ENCODE measurements at regions of chr2 and their contacts with region 1.

Region 1: DNA sequence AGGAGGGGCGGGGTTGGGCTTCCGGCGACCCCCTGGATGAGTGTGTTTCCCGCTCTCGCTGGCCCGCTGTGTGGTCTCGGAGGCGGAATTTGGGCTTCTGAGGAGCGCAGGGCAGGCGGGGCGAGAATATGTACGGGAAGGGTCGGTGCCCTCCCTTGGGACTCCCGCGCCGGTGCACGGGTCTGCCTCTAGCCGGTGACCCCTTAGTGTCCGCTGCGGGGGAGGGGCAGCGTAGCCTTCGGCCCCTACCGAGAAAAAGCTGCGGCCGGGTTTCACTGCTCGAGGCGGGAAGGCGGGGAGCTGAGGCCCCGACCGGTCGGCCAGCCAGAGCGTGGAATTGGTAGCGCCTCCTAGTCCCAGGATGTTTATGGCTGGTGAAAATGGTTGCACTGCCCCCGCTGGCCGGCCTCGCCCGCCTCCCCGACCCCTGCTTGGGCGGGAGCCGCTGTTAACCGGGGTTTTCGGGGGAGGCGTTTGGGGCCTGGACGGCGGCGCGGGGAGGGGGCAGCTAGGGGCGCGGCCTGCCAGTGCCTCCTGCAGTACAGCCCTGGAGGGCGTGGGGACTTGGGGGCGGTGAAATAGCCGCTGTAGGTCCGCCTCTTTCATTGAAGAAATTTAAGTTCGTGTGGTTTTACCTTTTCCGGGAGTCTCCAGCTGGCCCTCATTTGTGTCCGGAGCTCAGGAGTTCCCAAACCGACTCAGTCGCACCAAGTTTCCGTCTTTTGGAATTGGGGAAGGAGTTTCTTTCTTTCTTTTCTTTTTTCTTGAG is at the start of gene UGP2:
- DNase-seq: peak; percentile 92
- H3K4me3 Mint-ChIP-seq: peak within 1 kb of the TSS; percentile 93
- H3K27ac Mint-ChIP-seq: peak within 1 kb of the TSS; percentile 96
- H3K4me1 Mint-ChIP-seq: peaks cover 13% of the 10 kb centered on the region
- H3K27me3 Mint-ChIP-seq: no peaks in the 10 kb centered on the region
- CTCF ChIP-seq: no peak
- total RNA-seq, gene UGP2: 77.3 and 78.4 TPM in 2 replicates

Region 2: DNA sequence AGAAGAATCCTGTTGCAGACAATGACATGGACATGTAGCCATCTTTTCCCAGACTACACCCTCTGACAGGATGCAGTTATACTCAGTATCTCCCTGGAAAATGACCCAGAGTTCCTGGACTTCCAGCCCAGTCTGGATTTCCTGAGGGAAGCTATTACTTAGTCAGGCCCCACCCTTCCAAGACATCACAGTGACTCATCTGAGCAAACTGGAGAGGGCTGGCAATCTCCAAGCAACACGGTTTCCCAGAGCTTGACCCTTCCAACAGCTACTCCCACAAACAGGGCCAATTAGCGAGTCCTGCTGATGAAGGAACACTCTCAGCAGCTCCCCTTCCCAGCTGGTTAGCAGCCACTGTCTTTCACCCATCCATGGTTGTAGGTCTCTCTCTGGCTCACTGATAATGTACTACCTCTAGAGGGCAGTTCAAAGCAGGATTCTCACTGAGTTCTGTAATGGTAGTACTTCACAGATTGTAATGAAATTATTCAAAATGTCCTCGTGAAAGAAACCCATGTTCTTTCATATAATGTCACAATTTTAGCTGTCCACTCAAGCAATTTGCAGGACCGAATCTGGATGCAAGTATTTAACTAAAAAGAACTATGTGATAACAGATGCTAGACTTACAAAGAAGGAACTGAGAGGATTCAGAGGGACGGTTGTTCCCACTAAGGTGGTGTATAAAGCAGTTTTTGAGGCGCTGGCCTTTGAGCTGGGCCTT is 142.5 kb before region 1 on chr2:
- CTCF ChIA-PET with region 1: interaction called, 55 read pairs
- POLR2A ChIA-PET with region 1: interaction called, 229 read pairs
- intact Hi-C with region 1: loop called (anchors 1 kb)
- DNase-seq: peak; percentile 92
- H3K4me3 Mint-ChIP-seq: peak overlapping the region; percentile 5
- H3K27ac Mint-ChIP-seq: peak overlapping the region; percentile 57
- H3K4me1 Mint-ChIP-seq: peaks cover 22% of the 10 kb centered on the region
- H3K27me3 Mint-ChIP-seq: no peaks in the 10 kb centered on the region
- CTCF ChIP-seq: peak; percentile 47

Region 3: GRCh38 chr2:63736354-63736753 is 105.1 kb before region 1 on chr2:
- CTCF ChIA-PET with region 1: interaction called, 6 read pairs
- POLR2A ChIA-PET with region 1: interaction called, 321 read pairs
- intact Hi-C with region 1: loop called (anchors 2 kb)
- DNase-seq: no peak
- H3K4me3 Mint-ChIP-seq: no peak overlapping the region
- H3K27ac Mint-ChIP-seq: peak overlapping the region; percentile 37
- H3K4me1 Mint-ChIP-seq: peaks cover 50% of the 10 kb centered on the region
- H3K27me3 Mint-ChIP-seq: no peaks in the 10 kb centered on the region
- CTCF ChIP-seq: no peak

Region 4: GRCh38 chr2:63780483-63781155 is 60.8 kb before region 1 on chr2:
- CTCF ChIA-PET with region 1: no interaction called
- POLR2A ChIA-PET with region 1: interaction called, 19 read pairs
- intact Hi-C with region 1: no loop called
- DNase-seq: no peak
- H3K4me3 Mint-ChIP-seq: no peak overlapping the region
- H3K27ac Mint-ChIP-seq: no peak overlapping the region
- H3K4me1 Mint-ChIP-seq: no peaks in the 10 kb centered on the region
- H3K27me3 Mint-ChIP-seq: no peaks in the 10 kb centered on the region
- CTCF ChIP-seq: no peak

Region 5: GRCh38 chr2:63827749-63828148 is 13.7 kb before region 1 on chr2:
- CTCF ChIA-PET with region 1: interaction called, 3 read pairs
- POLR2A ChIA-PET with region 1: interaction called, 42 read pairs
- intact Hi-C with region 1: no loop called
- DNase-seq: peak; percentile 39
- H3K4me3 Mint-ChIP-seq: no peak overlapping the region
- H3K27ac Mint-ChIP-seq: no peak overlapping the region
- H3K4me1 Mint-ChIP-seq: peaks cover 12% of the 10 kb centered on the region
- H3K27me3 Mint-ChIP-seq: no peaks in the 10 kb centered on the region
- CTCF ChIP-seq: no peak

Region 6: GRCh38 chr2:64045938-64046337 is 204.5 kb after region 1 on chr2:
- CTCF ChIA-PET with region 1: no interaction called
- POLR2A ChIA-PET with region 1: no interaction called
- intact Hi-C with region 1: no loop called
- DNase-seq: no peak
- H3K4me3 Mint-ChIP-seq: no peak overlapping the region
- H3K27ac Mint-ChIP-seq: no peak overlapping the region
- H3K4me1 Mint-ChIP-seq: peaks cover 6% of the 10 kb centered on the region
- H3K27me3 Mint-ChIP-seq: no peaks in the 10 kb centered on the region
- CTCF ChIP-seq: no peak

Region 7: DNA sequence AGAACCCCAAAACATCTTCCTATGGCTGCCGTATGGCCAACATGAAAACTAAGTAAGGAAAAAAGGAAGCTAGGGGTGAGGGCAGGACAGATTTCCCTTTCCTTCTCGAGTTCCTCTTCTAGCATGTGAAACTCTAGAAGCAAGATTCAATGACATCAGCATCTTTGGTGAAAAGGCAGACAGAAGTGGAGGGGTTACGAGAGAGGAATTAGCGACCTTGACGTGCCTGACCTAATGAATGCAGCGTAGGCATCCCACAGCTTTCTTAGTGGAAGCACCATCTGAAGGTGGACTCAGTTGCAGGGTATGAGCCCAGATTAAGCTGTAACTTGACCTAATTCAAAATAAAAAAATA is 350.7 kb after region 1 on chr2:
- CTCF ChIA-PET with region 1: no interaction called
- POLR2A ChIA-PET with region 1: no interaction called
- intact Hi-C with region 1: no loop called
- DNase-seq: no peak
- H3K4me3 Mint-ChIP-seq: no peak overlapping the region
- H3K27ac Mint-ChIP-seq: no peak overlapping the region
- H3K4me1 Mint-ChIP-seq: peaks cover 7% of the 10 kb centered on the region
- H3K27me3 Mint-ChIP-seq: no peaks in the 10 kb centered on the region
- CTCF ChIP-seq: no peak